ENCODE measurements at regions of chr14 and their contacts with region 1.

Region 1: GRCh38 chr14:52131640-52132320 is 62.9 kb upstream of the NID2 start:
- DNase-seq: peak; percentile 72
- H3K4me3 ChIP-seq: no peak overlapping the region
- CTCF ChIP-seq: peak; percentile 78

Region 2: DNA sequence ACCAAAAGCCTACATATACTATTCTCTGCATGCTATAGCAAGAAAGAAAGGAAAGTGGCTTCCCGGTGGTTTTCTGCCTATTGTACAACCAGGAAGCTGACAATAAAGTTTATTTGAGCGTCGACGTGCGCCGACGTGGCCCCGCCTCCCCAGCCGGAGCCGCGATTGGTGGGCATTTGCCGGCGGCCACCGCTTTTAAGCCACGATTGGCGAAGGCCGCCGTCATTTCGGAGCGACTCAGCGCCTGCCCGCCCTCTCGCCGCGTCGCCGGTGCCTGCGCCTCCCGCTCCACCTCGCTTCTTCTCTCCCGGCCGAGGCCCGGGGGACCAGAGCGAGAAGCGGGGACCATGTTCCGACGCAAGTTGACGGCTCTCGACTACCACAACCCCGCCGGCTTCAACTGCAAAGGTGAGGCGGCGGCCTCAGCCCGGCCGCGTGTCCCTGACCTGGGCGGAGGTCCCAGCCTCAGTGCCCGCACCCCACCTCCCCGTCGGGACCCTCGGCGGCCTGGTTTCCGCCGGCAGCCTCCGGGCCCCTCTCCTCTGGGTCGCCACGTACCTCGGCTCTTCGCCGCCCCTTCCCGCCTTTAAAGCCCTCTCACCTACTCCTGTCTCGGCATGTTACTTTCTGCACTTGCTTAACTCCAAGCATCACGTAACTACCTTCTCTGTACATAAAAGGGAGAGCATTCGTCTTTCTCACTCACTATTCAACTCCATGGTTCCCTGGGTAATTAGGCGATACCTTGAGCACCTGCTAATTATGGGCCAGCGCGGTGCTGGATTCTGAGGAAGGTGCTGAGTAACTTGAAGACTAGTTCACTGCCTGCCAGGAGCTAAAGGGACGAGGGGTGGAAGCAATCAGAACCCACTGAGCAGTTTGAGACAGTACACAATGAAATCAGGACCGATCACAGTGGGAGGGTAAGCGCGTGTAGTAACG is 142.2 kb before region 1 on chr14 and contains the start of gene RTRAF:
- CTCF ChIA-PET with region 1: interaction called, 182 read pairs
- POLR2A ChIA-PET with region 1: no interaction called
- DNase-seq: peak; percentile 45
- H3K4me3 ChIP-seq: peak within 1 kb of the TSS; percentile 86
- CTCF ChIP-seq: no peak

Region 3: DNA sequence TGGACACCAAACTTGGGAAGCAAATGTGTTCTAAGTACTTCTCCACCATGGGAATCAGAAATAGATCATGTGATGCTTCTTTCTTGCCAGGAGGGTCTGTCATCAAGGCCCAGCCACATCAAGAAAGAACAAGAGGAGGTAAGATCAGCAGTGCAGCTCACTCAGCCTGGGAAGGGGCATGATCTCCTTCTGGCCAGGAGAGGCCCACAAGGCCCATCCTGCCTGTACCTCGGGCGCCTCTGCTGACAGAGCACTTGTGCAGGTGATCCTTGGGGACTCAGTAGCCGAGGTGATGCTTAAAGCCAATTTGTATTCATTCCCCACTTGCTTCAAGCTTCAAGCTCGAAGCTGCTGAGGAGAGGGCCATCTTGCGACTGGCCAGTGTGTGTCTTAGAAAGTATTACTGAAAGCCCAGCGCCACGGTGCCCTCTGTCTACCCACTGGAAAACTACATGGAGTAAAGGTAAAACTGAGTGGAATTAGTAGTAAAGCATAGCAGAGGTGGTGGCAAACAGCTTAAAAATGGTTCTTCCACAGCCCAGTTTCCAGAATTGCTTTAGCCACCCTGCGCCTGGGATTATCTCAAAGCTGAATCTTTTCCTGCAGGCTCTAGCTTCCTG is 116.3 kb before region 1 on chr14:
- CTCF ChIA-PET with region 1: interaction called, 13 read pairs
- POLR2A ChIA-PET with region 1: no interaction called
- DNase-seq: no peak
- H3K4me3 ChIP-seq: no peak overlapping the region
- CTCF ChIP-seq: peak; percentile 45

Region 4: GRCh38 chr14:52043690-52044089 is 88.1 kb before region 1 on chr14:
- CTCF ChIA-PET with region 1: interaction called, 36 read pairs
- POLR2A ChIA-PET with region 1: interaction called, 4 read pairs
- DNase-seq: no peak
- H3K4me3 ChIP-seq: no peak overlapping the region
- CTCF ChIP-seq: peak; percentile 59

Region 5: DNA sequence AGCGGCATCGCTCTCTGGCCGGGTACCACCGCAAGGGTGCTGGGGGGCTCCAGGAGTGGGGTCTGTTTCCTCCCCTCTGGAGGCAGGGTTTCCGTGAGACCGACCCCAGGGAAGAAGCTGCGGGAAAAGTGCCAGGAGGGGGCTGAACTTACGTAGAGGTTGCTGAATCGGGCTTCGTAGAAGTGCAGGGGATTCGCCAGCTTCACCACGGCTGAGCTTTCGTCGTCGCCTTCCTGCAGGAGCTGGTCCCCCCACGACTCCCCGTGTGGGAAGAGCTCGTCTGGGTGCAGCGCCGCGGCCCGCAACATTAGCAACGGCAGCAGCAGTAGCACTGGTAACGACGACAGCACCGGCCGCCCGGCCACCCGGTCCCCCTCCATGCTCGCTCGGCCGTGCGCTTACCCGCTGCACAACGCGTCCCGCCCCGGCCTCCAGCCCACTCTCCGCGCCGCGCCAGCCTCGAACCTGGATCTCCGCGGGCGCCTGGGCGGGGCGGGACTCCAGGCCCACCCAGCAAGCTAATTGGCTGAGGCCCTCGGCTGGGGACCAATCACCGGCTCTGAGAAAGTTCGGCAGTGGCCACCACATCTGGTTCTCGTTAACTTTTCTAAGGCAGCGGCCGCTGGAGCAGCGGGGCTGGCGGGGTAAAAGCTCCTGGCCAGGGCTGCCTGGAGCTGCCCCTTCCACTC is 63.0 kb before region 1 on chr14 and contains the start of gene NID2:
- CTCF ChIA-PET with region 1: interaction called, 19 read pairs
- POLR2A ChIA-PET with region 1: no interaction called
- DNase-seq: no peak
- H3K4me3 ChIP-seq: peak within 1 kb of the TSS; percentile 88
- CTCF ChIP-seq: no peak